Heart right ventricle (tissue), 16 donors: ENCODE measurements at regions of chr10 and their contacts with region 1.

Region 1: DNA sequence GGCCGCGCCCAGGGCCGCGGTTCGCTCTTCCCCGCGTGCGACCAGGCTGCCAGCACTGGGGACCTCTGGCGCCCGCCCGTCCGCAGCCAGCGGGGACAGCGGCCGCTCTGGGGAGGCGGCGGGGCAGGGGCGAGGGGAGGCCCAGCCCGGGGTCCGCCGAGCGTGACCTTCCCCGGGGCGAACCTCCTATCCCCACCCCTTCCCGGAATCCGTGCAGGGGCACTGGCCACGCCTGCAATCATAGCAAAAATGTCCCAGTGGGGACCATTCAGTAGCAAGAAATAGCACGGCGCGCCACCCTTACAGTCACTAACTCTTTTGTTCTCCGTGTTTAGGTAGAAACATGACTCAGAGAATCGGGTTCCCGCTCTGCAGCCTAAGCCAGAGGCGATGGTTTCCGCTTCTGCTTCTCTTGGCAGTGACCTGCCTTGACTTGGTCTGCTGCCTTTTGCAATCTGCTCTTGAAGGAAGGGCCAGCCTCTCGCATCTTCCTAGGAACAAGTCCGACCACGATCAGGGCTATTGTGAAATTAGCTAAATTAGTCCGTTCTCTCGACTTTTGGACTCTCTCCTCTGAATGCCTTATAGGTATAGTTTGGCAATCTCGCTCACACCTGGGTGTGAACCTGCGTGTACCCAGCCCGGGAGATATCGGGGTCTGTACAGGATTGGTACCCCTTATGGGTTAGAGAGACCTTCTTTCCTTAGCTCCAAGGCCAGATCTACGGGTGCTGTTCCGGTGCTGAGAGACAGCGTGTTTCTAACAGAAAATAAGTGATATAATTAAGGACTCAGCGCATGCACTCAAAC is 79.4 kb upstream of the ACBD5 start:
- DNase-seq: peak; percentile 48 to 50
- ATAC-seq: peak; percentile 58 to 97 (median 88)
- H3K4me3 ChIP-seq: peak overlapping the region in 9 of 10 donors; percentile 16 to 57 (median 52)
- H3K27ac ChIP-seq: peak overlapping the region in 9 of 10 donors; percentile 51 to 93 (median 78)
- H3K4me1 ChIP-seq: peaks cover 0 to 14% (median 6%) of the 10 kb centered on the region in 9 donors
- H3K27me3 ChIP-seq: peaks cover 0 to 20% (median 5%) of the 10 kb centered on the region in 7 donors
- CTCF ChIP-seq: no peak

Region 2: GRCh38 chr10:26621889-26622711 is 697.9 kb before region 1 on chr10:
- intact Hi-C with region 1: loop called in 4 of 10 experiments (anchors 5 to 10 kb)
- DNase-seq: peak in 1 of 2 donors; percentile 28
- ATAC-seq: peak in 2 of 8 donors; percentile 38 to 66
- H3K4me3 ChIP-seq: peak overlapping the region in 9 of 10 donors; percentile 19 to 48 (median 43)
- H3K27ac ChIP-seq: no peak overlapping the region
- H3K4me1 ChIP-seq: peaks cover 0 to 4% (median 0%) of the 10 kb centered on the region in 9 donors
- H3K27me3 ChIP-seq: peaks cover 0 to 60% (median 34%) of the 10 kb centered on the region in 7 donors
- CTCF ChIP-seq: no peak

Region 3: GRCh38 chr10:26627324-26627723 is 692.6 kb before region 1 on chr10:
- intact Hi-C with region 1: loop called in 4 of 10 experiments (anchors 5 to 10 kb)
- DNase-seq: no peak
- ATAC-seq: no peak
- H3K4me3 ChIP-seq: no peak overlapping the region
- H3K27ac ChIP-seq: no peak overlapping the region
- H3K4me1 ChIP-seq: peaks cover 0 to 3% (median 0%) of the 10 kb centered on the region in 9 donors
- H3K27me3 ChIP-seq: peaks cover 0 to 59% (median 25%) of the 10 kb centered on the region in 7 donors
- CTCF ChIP-seq: peak in 1 of 9 donors; percentile 14